H1 (cell line): ENCODE measurements at regions of chr16 and their contacts with region 1.

Region 1: DNA sequence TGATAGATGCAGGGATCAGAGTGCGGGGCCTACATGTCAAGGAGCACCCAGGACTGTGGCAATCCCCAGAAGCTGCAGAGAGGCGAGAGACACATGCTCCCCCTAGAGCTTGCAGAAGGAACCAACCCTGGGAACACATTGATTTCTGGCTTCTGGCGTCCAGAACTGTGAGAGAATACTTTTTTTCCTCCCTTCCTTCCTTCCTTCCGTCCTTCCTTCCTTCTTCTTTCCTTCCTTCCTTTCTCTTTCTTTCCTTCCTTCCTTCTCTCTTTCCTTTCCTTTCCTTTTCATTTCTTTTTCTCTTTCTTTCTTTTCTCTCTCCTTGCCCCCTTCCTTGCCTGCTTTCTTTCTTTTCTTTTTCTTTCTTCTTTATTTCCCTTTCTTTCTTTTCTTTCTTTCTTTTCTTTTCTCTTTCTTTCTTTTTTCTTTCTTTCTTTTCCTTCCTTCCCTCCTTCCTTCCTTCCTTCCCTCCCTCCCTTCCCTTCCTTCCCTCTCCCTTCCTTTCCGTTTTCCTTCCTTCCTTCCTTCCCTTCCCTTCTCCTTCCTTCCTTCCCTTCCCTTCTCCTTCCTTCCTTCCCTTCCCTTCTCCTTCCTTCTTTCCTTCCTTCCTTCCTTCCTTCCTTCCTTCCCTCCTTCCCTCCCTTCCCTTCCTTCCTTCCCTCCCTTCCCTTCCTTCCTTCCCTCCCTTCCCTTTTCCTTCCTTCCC is 134.3 kb downstream of the HAPSTR1 start:
- DNase-seq: no peak
- H3K4me3 ChIP-seq: no peak overlapping the region
- H3K27ac ChIP-seq: no peak overlapping the region
- H3K4me1 ChIP-seq: no peaks in the 10 kb centered on the region; a peak in 1 of 7 replicates
- H3K27me3 ChIP-seq: no peaks in the 10 kb centered on the region
- CTCF ChIP-seq: peak; percentile 75 to 87 (median 77)
- EP300 ChIP-seq: no peak
- POLR2A ChIP-seq: no peak
- RAD21 ChIP-seq: peak; percentile 70 to 76

Region 2: GRCh38 chr16:9072806-9073341 is 152.9 kb before region 1 on chr16:
- CTCF ChIA-PET with region 1: no interaction called
- POLR2A ChIA-PET with region 1: no interaction called
- DNase-seq: no peak
- H3K4me3 ChIP-seq: no peak overlapping the region
- H3K27ac ChIP-seq: no peak overlapping the region
- H3K4me1 ChIP-seq: peaks cover 0 to 4% (median 0%) of the 10 kb centered on the region in 4 experiments; a peak in 1 of 7 replicates
- H3K27me3 ChIP-seq: no peaks in the 10 kb centered on the region; a peak in 1 of 7 replicates
- CTCF ChIP-seq: no peak
- EP300 ChIP-seq: no peak
- POLR2A ChIP-seq: no peak
- RAD21 ChIP-seq: no peak

Region 3: GRCh38 chr16:9235867-9236266 is 10.1 kb after region 1 on chr16:
- CTCF ChIA-PET with region 1: interaction called, 14 read pairs
- POLR2A ChIA-PET with region 1: interaction called, 3 read pairs
- DNase-seq: no peak
- H3K4me3 ChIP-seq: no peak overlapping the region
- H3K27ac ChIP-seq: no peak overlapping the region
- H3K4me1 ChIP-seq: peaks cover 0 to 4% (median 2%) of the 10 kb centered on the region in 4 experiments; a peak in 2 of 7 replicates
- H3K27me3 ChIP-seq: no peaks in the 10 kb centered on the region
- CTCF ChIP-seq: no peak
- EP300 ChIP-seq: no peak
- POLR2A ChIP-seq: no peak
- RAD21 ChIP-seq: no peak

Region 4: GRCh38 chr16:9286930-9287329 is 61.2 kb after region 1 on chr16:
- CTCF ChIA-PET with region 1: no interaction called
- POLR2A ChIA-PET with region 1: no interaction called
- DNase-seq: no peak
- H3K4me3 ChIP-seq: no peak overlapping the region
- H3K27ac ChIP-seq: no peak overlapping the region
- H3K4me1 ChIP-seq: no peaks in the 10 kb centered on the region; a peak in 1 of 7 replicates
- H3K27me3 ChIP-seq: no peaks in the 10 kb centered on the region
- CTCF ChIP-seq: no peak
- EP300 ChIP-seq: no peak
- POLR2A ChIP-seq: no peak
- RAD21 ChIP-seq: no peak

Region 5: DNA sequence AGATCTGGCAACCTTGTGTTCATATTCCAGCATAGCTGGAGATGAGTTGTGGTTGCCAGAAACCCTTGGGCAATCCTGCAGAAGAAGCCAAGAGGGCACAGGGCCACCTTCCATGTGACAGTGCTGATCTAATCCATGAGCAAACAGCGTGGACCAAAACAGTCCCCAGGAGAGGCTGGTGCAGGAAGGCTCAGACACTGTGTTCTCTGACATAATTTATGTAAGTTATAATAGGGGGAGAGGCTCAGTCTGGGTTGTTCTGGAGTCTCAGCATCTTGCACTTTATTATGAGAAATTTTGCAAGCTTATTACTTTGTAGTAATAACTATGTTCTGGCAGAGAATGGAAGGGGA is 139.6 kb after region 1 on chr16:
- CTCF ChIA-PET with region 1: no interaction called
- POLR2A ChIA-PET with region 1: no interaction called
- DNase-seq: peak in 1 of 2 experiments; percentile 4
- H3K4me3 ChIP-seq: no peak overlapping the region
- H3K27ac ChIP-seq: no peak overlapping the region
- H3K4me1 ChIP-seq: no peaks in the 10 kb centered on the region; a peak in 1 of 7 replicates
- H3K27me3 ChIP-seq: no peaks in the 10 kb centered on the region; a peak in 1 of 7 replicates
- CTCF ChIP-seq: no peak
- EP300 ChIP-seq: no peak
- POLR2A ChIP-seq: no peak
- RAD21 ChIP-seq: no peak